Gastrocnemius medialis (tissue), 4 donors: ENCODE measurements at regions of chr17 and their contacts with region 1.

Region 1: DNA sequence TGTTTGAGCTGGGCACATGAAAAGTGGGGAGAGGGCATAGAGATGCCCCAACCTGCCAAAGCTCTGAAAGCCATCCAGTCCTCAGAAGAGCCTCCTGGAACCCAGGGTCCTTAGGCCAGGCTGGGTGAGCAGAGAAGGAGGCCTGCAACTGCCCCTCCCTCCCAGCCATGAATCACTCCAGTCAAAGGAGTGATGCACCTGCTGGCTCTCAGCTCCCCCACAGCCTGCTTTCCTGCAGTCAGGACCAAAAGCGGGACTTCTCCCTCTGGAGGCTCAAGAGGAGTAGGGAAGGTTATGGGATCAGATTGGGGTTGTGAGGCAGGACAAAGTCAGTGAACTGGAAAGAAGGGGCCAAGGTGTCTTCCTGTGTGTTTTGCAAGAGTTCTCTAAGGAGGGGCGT is 145.6 kb downstream of the TMEM132E start:
- DNase-seq: no peak
- ATAC-seq: no peak
- H3K4me3 ChIP-seq: no peak overlapping the region
- H3K27ac ChIP-seq: no peak overlapping the region
- H3K4me1 ChIP-seq: no peaks in the 10 kb centered on the region
- H3K27me3 ChIP-seq: peaks cover 0 to 5% (median 0%) of the 10 kb centered on the region in 3 donors
- CTCF ChIP-seq: no peak
- POLR2A ChIP-seq: no peak

Region 2: GRCh38 chr17:34584805-34585416 is 140.1 kb before region 1 on chr17:
- in situ Hi-C with region 1: loop called in 1 of 4 experiments (anchors 25 kb)
- intact Hi-C with region 1: no loop called
- DNase-seq: no peak
- ATAC-seq: no peak
- H3K4me3 ChIP-seq: no peak overlapping the region
- H3K27ac ChIP-seq: no peak overlapping the region
- H3K4me1 ChIP-seq: peaks cover 15 to 16% of the 10 kb centered on the region in 2 donors
- H3K27me3 ChIP-seq: peaks cover 32 to 46% (median 39%) of the 10 kb centered on the region in 3 donors
- CTCF ChIP-seq: no peak
- POLR2A ChIP-seq: no peak